WTC11 (cell line): ENCODE measurements at regions of chr1 and their contacts with region 1.

Region 1: GRCh38 chr1:26856604-26857469 is 6.1 kb upstream of the SFN start:
- DNase-seq: no peak
- ATAC-seq: peak; percentile 44
- H3K4me3 Mint-ChIP-seq: no peak overlapping the region
- H3K27ac Mint-ChIP-seq: peak overlapping the region; percentile 70
- H3K4me1 Mint-ChIP-seq: peaks cover 19% of the 10 kb centered on the region
- H3K27me3 Mint-ChIP-seq: no peaks in the 10 kb centered on the region
- CTCF ChIP-seq: no peak

Region 2: GRCh38 chr1:26582836-26583460 is 273.9 kb before region 1 on chr1:
- CTCF ChIA-PET with region 1: interaction called, 10 read pairs
- POLR2A ChIA-PET with region 1: no interaction called
- DNase-seq: no peak
- ATAC-seq: no peak
- H3K4me3 Mint-ChIP-seq: no peak overlapping the region
- H3K27ac Mint-ChIP-seq: no peak overlapping the region
- H3K4me1 Mint-ChIP-seq: no peaks in the 10 kb centered on the region
- H3K27me3 Mint-ChIP-seq: no peaks in the 10 kb centered on the region
- CTCF ChIP-seq: no peak

Region 3: DNA sequence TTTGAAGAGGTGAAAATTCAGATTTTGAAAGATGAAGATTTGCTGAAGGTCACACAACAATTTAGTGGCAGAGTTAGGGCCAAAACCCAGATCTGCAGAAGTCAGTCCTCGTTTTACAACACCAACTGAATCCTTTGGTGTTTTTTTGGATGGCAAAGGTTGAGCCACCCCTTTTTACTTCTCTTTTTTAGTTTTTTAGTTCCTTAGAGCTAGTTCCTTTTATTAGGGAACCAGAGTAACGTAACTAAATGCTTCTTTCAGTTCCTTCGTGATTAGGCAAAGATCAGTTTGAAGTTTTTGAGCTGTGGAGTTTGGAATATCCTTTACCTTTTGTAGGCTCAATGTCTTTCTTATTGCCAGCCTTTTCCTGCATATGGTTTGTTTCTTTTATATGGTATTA is 228.9 kb before region 1 on chr1:
- CTCF ChIA-PET with region 1: no interaction called
- POLR2A ChIA-PET with region 1: no interaction called
- DNase-seq: no peak
- ATAC-seq: no peak
- H3K4me3 Mint-ChIP-seq: no peak overlapping the region
- H3K27ac Mint-ChIP-seq: no peak overlapping the region
- H3K4me1 Mint-ChIP-seq: peaks cover 3% of the 10 kb centered on the region; the same call in 1 of the 2 replicates
- H3K27me3 Mint-ChIP-seq: peaks cover 3% of the 10 kb centered on the region
- CTCF ChIP-seq: no peak

Region 4: DNA sequence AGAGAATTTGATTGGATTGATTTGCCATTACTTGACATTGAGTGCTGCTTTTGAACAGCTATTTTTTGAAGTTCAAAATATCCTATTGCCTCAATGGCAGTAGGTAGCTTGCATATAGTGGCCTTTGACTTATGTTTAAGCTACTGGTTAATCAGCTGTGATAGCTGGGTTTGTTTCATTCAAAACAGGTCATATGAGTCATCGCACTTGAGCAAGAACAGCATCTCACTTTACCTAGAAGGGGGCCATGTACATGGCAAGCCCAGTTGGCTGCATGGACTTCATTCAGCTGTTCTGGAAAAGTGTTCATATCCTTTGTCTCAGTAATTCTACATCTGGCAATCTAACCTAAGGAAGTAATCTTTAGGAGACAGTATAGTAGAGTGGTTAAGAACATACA is 190.0 kb before region 1 on chr1:
- CTCF ChIA-PET with region 1: no interaction called
- POLR2A ChIA-PET with region 1: no interaction called
- DNase-seq: no peak
- ATAC-seq: no peak
- H3K4me3 Mint-ChIP-seq: no peak overlapping the region
- H3K27ac Mint-ChIP-seq: no peak overlapping the region
- H3K4me1 Mint-ChIP-seq: peaks cover 5% of the 10 kb centered on the region
- H3K27me3 Mint-ChIP-seq: no peaks in the 10 kb centered on the region
- CTCF ChIP-seq: no peak

Region 5: DNA sequence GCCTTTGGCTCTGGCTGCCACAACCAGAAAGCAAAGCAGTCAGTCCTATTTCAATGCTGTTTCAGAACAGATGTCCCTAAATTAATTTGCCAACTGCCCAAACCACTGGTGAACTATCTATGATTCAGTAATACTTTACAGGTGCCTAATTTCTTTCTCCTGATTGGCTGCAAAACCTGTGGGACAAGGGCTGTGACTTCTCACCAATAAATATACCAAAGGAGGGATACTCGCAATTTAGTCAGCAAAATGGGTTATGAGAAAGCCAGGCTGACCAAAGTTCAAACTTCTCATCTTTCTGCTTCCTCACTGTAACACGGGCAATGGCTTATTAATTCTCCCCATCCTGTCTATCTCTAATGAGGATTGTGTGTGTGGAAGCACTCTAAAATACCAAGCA is 20.5 kb after region 1 on chr1:
- CTCF ChIA-PET with region 1: interaction called, 23 read pairs
- POLR2A ChIA-PET with region 1: interaction called, 4 read pairs
- DNase-seq: no peak
- ATAC-seq: no peak
- H3K4me3 Mint-ChIP-seq: no peak overlapping the region
- H3K27ac Mint-ChIP-seq: no peak overlapping the region
- H3K4me1 Mint-ChIP-seq: 0 out of 2 replicates have a peak, but pooled peaks cover 3% of the 10 kb centered on the region
- H3K27me3 Mint-ChIP-seq: no peaks in the 10 kb centered on the region
- CTCF ChIP-seq: no peak

Region 6: DNA sequence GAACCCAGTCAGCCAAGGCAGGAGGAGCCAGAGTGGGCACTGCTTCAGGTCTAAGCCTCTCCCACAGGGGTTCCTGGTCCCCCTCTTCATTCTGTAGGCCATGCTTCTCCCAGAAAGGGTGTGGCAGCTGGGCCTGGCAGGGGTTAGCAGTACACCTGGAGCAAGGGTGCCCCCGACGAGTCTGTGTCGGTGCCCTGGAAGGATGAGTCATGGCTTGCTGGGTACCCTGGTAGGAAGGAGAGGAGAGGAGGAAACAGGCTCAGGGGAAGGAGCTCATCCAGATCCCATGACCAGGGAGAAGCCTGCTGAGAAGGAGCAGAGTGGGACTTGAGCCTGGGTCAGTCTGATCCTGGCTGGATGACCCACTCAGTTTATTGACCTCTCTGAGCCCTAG is 93.1 kb after region 1 on chr1:
- CTCF ChIA-PET with region 1: no interaction called
- POLR2A ChIA-PET with region 1: no interaction called
- DNase-seq: no peak
- ATAC-seq: no peak
- H3K4me3 Mint-ChIP-seq: no peak overlapping the region
- H3K27ac Mint-ChIP-seq: no peak overlapping the region
- H3K4me1 Mint-ChIP-seq: no peaks in the 10 kb centered on the region
- H3K27me3 Mint-ChIP-seq: no peaks in the 10 kb centered on the region
- CTCF ChIP-seq: no peak